ENCODE measurements at regions of chr13 and their contacts with region 1.

Region 1: DNA sequence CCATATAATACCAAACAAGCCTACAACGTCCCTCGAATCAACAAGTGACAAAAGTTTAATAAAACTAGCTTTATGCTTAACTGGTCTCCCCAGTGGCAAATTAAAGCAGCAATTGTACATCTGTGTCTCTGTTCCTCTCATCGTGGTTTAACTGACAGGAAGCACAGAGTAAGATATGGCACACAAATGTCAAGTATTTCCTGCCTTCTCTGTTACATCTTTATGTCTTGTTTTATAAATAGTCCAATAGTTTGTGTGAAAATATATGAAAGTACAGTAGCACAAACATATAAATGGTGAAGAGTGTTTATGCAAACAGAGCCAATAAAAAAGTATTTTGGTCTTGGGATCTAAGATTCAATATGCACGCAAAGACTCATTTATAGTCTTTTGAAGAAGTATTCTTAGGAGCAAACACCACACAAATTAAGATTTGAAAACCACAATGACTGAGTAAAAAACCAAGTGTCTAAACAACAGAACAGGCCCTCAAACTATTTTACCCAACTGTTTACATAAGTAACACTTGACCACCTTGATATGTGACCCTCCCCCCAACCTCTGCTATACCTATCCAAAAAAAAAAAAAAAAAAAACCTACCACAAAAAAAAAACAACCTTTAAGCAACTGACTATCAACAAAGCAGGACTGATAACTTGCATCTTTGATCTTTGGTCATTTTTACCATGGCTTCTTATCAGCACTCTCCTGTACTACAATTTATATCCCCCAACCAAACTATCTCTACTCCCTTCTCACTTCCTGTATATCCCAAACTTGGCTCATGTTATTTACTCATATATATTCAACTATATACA is 14.0 kb downstream of the ELF1 start:
- DNase-seq: peak; percentile 52 to 72 (median 64)
- H3K4me3 ChIP-seq: peak overlapping the region in 1 of 2 donors; percentile 7
- H3K4me3 Mint-ChIP-seq: peak overlapping the region; percentile 38 to 87 (median 62)
- H3K27ac ChIP-seq: peak overlapping the region; percentile 59
- H3K27ac Mint-ChIP-seq: peak overlapping the region; percentile 73 to 94 (median 90)
- H3K4me1 ChIP-seq: peaks cover 93% of the 10 kb centered on the region
- H3K4me1 Mint-ChIP-seq: peaks cover 49 to 79% (median 60%) of the 10 kb centered on the region in 4 donors
- H3K27me3 ChIP-seq: no peaks in the 10 kb centered on the region
- H3K27me3 Mint-ChIP-seq: no peaks in the 10 kb centered on the region

Region 2: DNA sequence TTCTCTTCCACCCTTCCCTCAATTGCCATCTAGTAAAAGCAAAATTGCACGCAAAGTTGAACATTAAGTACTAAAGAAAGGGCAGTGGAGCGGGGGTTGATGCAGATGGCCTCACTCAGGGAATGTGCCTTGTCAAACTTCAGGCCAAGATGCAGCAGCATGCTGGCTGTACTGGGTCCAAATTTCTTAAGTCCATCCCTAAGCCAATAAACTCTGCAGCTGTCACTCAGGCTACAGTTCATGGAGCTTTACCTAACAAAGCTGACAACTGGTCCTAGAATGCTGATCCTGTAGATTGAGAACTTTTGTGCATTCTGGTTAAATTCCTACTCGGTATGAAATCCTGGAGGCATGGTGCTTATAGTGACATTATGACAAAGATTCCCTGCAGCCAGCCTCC is 427.0 kb before region 1 on chr13:
- CTCF ChIA-PET with region 1: no interaction called
- POLR2A ChIA-PET with region 1: no interaction called
- intact Hi-C with region 1: no loop called
- DNase-seq: no peak
- H3K4me3 ChIP-seq: no peak overlapping the region
- H3K4me3 Mint-ChIP-seq: peak overlapping the region in 6 of 8 donors; percentile 14 to 78 (median 38)
- H3K27ac ChIP-seq: no peak overlapping the region
- H3K27ac Mint-ChIP-seq: peak overlapping the region in 6 of 7 donors; percentile 11 to 82 (median 40)
- H3K4me1 ChIP-seq: peaks cover 96% of the 10 kb centered on the region
- H3K4me1 Mint-ChIP-seq: peaks cover 85 to 100% (median 94%) of the 10 kb centered on the region in 4 donors
- H3K27me3 ChIP-seq: no peaks in the 10 kb centered on the region
- H3K27me3 Mint-ChIP-seq: no peaks in the 10 kb centered on the region

Region 3: DNA sequence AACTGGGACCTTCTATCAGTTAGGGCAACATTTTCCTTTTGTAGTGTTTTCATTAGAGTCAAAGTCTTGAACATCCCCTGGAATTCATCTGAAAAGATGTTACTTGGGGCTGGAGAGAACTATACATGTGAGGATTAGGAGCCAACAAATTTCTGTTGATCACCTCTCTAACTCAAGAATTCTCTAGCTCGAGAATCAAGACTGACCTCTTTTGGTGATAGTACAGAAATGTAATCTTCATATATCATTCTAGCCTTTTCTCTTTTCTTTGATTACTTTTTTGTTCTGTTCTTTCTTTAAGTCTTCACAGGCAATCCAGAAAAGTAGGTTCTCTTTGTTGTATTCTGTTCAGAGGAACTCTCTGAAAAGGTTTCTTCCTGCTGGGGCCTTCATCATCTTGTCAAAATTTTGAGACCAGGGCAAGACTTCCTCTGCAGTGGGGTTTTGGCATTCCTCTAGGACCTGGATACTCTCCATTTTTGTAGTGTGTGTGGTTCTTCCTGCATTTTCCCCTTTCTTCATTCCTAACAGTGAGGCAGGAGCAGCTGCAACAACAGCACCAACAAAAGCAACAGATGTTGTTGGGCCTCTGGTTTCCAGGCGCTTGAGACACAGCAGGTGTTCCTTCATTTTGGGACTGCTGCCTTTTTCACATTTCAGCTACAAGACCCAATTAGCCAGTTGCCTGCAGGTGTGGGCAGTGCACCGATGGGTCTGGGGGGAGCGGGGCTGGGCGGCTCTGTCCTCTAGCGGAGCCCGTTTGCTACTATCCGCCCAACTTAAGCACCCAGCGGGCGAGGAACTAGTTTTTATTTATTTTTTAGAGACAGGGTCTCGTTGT is 12.2 kb before region 1 on chr13:
- CTCF ChIA-PET with region 1: interaction called, 11 read pairs
- POLR2A ChIA-PET with region 1: interaction called, 12 read pairs
- intact Hi-C with region 1: no loop called
- DNase-seq: no peak
- H3K4me3 ChIP-seq: no peak overlapping the region
- H3K4me3 Mint-ChIP-seq: peak overlapping the region in 6 of 8 donors; percentile 9 to 65 (median 35)
- H3K27ac ChIP-seq: peak overlapping the region; percentile 41
- H3K27ac Mint-ChIP-seq: peak overlapping the region; percentile 65 to 94 (median 85)
- H3K4me1 ChIP-seq: peaks cover 93% of the 10 kb centered on the region
- H3K4me1 Mint-ChIP-seq: peaks cover 54 to 87% (median 69%) of the 10 kb centered on the region in 4 donors
- H3K27me3 ChIP-seq: no peaks in the 10 kb centered on the region
- H3K27me3 Mint-ChIP-seq: no peaks in the 10 kb centered on the region

Measured in CD4-positive, alpha-beta memory T cell (primary cell).